ENCODE measurements at regions of chr3 and their contacts with region 1.

Region 1: DNA sequence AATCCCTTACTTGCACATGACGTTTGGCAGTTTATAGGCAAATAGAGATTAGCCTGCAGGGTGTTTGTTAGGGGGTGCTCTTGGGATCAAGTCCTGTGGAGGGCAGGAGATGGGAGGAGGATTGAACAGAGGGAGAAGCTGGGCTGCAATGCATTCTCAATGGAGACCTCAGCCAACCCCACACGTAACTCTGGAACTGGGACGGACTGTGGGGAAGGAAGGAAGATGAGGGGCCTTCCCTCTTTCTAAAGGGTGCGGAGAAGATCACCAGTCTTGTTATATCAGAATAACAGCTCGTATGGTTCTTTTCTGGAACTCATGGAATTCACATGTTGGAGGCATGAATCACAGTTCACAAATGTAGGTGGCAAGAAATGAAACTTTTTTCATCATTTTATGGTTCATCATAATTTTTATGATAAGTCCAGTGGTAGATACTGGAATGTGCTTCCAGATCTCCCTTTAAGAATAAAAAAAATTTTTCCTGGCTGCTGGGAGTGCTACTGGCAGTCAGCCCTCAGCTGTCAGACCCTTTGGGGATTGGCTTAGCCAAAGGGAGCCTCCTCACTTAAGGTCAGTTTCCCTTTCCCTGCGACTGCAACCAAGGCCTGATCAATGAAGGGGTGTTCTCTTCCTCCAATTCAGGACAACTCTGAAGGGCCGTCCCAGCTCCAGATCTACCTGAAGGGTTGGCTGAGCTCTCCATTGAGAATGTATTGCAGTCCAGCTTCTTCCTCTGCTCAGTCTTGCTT is 20.5 kb upstream of the LYZL4 start:
- DNase-seq: peak; percentile 21 to 33
- ATAC-seq: peak in 5 of 8 donors; percentile 38 to 81 (median 57)
- H3K4me3 ChIP-seq: no peak overlapping the region
- H3K27ac ChIP-seq: no peak overlapping the region
- H3K4me1 ChIP-seq: peaks cover 0 to 13% (median 0%) of the 10 kb centered on the region in 9 donors
- H3K27me3 ChIP-seq: peaks cover 0 to 5% (median 0%) of the 10 kb centered on the region in 7 donors
- CTCF ChIP-seq: no peak

Region 2: GRCh38 chr3:42387802-42388651 is 42.9 kb before region 1 on chr3:
- intact Hi-C with region 1: loop called in 1 of 10 experiments (anchors 1 kb)
- DNase-seq: no peak
- ATAC-seq: no peak
- H3K4me3 ChIP-seq: no peak overlapping the region
- H3K27ac ChIP-seq: no peak overlapping the region
- H3K4me1 ChIP-seq: no peaks in the 10 kb centered on the region
- H3K27me3 ChIP-seq: peaks cover 0 to 7% (median 4%) of the 10 kb centered on the region in 7 donors
- CTCF ChIP-seq: no peak

Region 3: DNA sequence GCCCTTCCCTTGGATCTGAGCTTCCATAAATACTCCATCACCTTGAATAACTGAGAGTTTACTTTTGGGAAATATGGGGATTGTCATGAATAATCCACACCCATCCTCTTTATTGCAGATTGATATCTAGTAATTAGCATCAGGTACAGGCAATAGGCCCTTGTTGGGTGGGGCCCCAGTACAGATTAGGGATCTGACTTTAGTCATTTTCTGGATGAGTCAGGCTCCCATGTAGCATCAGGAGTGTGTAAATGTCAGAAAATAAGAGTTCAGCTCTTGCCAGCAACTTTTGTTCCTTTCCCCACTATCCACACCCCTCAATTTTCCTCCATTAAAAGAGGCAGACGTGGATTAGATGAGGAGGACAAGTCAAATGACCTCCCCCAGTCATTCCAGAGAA is 837.7 kb after region 1 on chr3:
- intact Hi-C with region 1: no loop called
- DNase-seq: no peak
- ATAC-seq: peak in 1 of 8 donors; percentile 62
- H3K4me3 ChIP-seq: no peak overlapping the region
- H3K27ac ChIP-seq: no peak overlapping the region
- H3K4me1 ChIP-seq: no peaks in the 10 kb centered on the region
- H3K27me3 ChIP-seq: no peaks in the 10 kb centered on the region
- CTCF ChIP-seq: no peak

Measured in heart right ventricle (tissue), 16 donors.